Panc1 (cell line): ENCODE measurements at regions of chr17 and their contacts with region 1.

Region 1: DNA sequence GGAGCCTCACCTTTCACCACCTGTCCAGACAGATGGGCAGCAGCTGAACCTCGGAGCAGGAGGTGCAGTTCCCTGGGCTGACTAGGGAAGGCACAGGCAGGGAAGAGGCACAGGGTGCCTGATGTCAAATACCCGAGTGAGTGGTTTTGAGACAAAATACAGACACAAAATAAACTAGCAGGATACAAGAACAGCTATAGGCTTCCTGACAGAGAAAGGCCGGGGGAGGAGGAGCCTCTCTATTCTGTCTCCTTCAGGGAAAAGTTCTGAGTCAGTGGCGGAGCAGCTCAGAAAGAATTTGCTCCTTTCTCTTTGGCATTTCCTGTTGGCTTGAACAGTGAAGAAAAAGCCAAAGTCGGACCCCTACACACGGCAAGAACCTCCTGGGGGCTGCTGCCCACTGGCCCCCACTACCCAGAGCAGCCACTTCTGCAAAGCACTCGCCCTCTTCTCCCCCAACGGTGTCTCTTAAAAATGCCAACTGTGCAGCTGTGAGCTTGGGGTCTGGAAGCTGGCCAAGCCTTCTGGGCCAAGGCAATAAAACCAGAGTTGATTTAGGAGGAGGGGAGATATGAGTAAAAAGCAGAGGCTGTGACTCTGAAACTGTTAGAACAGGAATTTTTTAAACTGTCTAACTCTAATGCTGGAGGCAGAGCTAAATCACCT is 14.4 kb upstream of the FAAP100 start:
- DNase-seq: no peak
- ATAC-seq: peak; percentile 86
- H3K4me3 ChIP-seq: peak overlapping the region in 1 of 2 experiments; percentile 17; a peak in 2 of 4 replicates
- H3K27ac ChIP-seq: peak overlapping the region; percentile 100
- H3K4me1 ChIP-seq: peaks cover 80% of the 10 kb centered on the region
- H3K27me3 ChIP-seq: no peaks in the 10 kb centered on the region
- CTCF ChIP-seq: no peak

Region 2: GRCh38 chr17:81553018-81553615 is 13.5 kb before region 1 on chr17:
- CTCF ChIA-PET with region 1: no interaction called
- POLR2A ChIA-PET with region 1: interaction called, 6 read pairs
- in situ Hi-C with region 1: no loop called
- intact Hi-C with region 1: loop called (anchors 2 kb)
- DNase-seq: no peak
- ATAC-seq: peak; percentile 71
- H3K4me3 ChIP-seq: peak overlapping the region; percentile 84 to 91
- H3K27ac ChIP-seq: peak overlapping the region; percentile 100
- H3K4me1 ChIP-seq: peaks cover 54% of the 10 kb centered on the region
- H3K27me3 ChIP-seq: no peaks in the 10 kb centered on the region
- CTCF ChIP-seq: no peak